Mammary epithelial cell (primary cell): ENCODE measurements at regions of chr17 and their contacts with region 1.

Region 1: DNA sequence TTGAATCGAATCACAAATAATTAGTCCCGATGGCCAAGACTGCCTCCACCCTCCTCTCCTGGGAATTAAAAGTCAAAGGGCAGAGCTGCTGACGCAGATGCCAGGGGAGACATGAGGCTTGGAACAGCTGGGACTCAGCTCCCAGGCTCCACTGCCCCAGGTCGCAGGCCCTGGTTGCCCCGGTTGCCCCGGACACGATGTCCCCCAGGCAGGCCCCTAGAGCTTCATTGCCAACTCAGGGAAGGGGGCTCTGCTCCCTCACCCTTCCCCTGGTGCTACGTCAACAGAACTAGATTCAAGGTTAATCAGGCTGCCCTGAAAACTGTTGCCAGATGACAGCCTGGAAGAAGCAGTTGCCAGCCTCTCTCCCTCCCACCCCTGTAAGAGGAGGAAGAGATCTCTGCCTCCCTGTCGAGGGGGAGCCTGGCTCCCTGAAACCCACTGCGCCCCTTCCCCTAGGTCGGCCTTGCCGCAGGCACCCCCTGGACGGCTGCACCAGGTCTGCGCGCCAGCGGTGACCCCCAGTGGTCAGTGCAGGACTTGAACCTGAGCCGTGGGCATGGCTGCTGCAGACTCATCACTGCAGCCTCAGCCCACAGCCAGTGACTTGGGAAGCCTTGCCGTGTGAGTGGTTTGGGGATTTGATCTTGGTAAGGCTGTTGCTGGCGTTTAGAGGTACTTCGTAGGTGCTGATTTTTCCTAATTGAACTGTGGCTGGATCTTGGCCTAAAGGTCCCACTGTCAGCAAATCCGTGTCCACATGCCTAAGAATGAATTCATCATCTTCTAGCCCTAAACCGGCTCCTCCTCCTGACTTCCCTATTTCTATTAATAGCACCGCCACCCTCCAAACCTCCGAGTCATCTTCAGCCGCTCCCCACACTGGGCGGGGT is 84.1 kb upstream of the TOB1 start:
- DNase-seq: peak; percentile 93
- H3K4me3 ChIP-seq: no peak overlapping the region
- H3K27ac ChIP-seq: peak overlapping the region; percentile 66
- H3K4me1 ChIP-seq: peaks cover 69% of the 10 kb centered on the region
- H3K27me3 ChIP-seq: no peaks in the 10 kb centered on the region
- CTCF ChIP-seq: peak; percentile 56 to 80

Region 2: GRCh38 chr17:50626037-50626574 is 324.1 kb before region 1 on chr17:
- CTCF ChIA-PET with region 1: no interaction called
- dilution Hi-C with region 1: no loop called
- in situ Hi-C with region 1: no loop called
- intact Hi-C with region 1: loop called (anchors 10 kb)
- DNase-seq: peak; percentile 39
- H3K4me3 ChIP-seq: no peak overlapping the region
- H3K27ac ChIP-seq: no peak overlapping the region
- H3K4me1 ChIP-seq: no peaks in the 10 kb centered on the region
- H3K27me3 ChIP-seq: no peaks in the 10 kb centered on the region
- CTCF ChIP-seq: peak; percentile 62 to 80

Region 3: GRCh38 chr17:50763716-50764475 is 186.3 kb before region 1 on chr17:
- CTCF ChIA-PET with region 1: no interaction called
- dilution Hi-C with region 1: loop called (anchors 5 kb)
- in situ Hi-C with region 1: no loop called
- intact Hi-C with region 1: no loop called
- DNase-seq: no peak
- H3K4me3 ChIP-seq: no peak overlapping the region
- H3K27ac ChIP-seq: no peak overlapping the region
- H3K4me1 ChIP-seq: peaks cover 20% of the 10 kb centered on the region
- H3K27me3 ChIP-seq: no peaks in the 10 kb centered on the region
- CTCF ChIP-seq: no peak

Region 4: GRCh38 chr17:50841949-50842354 is 108.3 kb before region 1 on chr17:
- CTCF ChIA-PET with region 1: no interaction called
- dilution Hi-C with region 1: loop called (anchors 5 kb)
- in situ Hi-C with region 1: no loop called
- intact Hi-C with region 1: no loop called
- DNase-seq: peak; percentile 51
- H3K4me3 ChIP-seq: no peak overlapping the region
- H3K27ac ChIP-seq: no peak overlapping the region
- H3K4me1 ChIP-seq: peaks cover 28% of the 10 kb centered on the region
- H3K27me3 ChIP-seq: no peaks in the 10 kb centered on the region
- CTCF ChIP-seq: peak; percentile 86 to 92

Region 5: DNA sequence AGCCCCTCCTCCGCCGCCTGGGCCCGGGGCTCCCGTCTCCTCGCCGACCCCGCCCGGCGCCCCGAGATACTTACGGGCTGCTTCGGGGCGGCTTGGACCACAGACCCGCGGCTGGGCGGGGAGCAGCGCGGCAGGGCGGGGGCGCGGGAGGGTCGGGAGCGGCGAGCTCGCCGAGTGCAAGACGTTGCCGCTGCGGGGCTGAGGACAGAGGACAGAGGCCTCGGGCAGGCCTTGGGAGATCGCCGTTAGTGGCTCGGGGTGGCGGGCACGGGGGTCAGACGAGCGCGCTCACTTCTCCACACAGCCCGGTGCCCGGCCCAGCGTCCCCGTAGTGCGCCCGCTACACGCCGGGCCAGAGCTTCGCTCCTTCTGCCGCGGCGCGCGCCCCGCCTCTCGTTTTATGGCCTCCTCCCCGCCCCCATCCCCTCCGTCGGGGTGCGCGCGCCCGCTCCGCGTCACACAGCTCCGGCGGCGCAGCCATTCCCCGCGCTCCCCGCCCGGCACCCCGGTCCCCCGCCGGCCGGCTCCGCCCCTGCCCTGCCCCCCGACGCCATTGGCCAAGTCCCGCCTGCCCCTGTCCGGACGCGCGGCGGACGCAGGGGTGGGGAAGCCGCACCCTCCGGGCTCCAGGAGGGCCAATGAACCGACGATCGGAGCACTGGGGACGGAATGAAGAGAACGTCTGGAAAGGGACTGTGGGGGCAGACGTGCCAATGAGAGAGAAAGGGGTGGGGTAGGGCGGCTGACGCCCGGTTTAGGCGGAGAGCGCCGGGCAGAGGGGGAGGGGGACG is 84.1 kb before region 1 on chr17 and contains the start of gene TOB1:
- CTCF ChIA-PET with region 1: interaction called, 4 read pairs
- dilution Hi-C with region 1: no loop called
- in situ Hi-C with region 1: loop called in 1 of 2 experiments (anchors 5 kb)
- intact Hi-C with region 1: loop called (anchors 1 kb)
- DNase-seq: peak; percentile 98
- H3K4me3 ChIP-seq: peak within 1 kb of the TSS; percentile 88 to 97 (median 94)
- H3K27ac ChIP-seq: peak within 1 kb of the TSS; percentile 97
- H3K4me1 ChIP-seq: peaks cover 16% of the 10 kb centered on the region
- H3K27me3 ChIP-seq: no peaks in the 10 kb centered on the region
- CTCF ChIP-seq: no peak
- total RNA-seq, gene TOB1: 51.2 to 149 TPM

Region 6: DNA sequence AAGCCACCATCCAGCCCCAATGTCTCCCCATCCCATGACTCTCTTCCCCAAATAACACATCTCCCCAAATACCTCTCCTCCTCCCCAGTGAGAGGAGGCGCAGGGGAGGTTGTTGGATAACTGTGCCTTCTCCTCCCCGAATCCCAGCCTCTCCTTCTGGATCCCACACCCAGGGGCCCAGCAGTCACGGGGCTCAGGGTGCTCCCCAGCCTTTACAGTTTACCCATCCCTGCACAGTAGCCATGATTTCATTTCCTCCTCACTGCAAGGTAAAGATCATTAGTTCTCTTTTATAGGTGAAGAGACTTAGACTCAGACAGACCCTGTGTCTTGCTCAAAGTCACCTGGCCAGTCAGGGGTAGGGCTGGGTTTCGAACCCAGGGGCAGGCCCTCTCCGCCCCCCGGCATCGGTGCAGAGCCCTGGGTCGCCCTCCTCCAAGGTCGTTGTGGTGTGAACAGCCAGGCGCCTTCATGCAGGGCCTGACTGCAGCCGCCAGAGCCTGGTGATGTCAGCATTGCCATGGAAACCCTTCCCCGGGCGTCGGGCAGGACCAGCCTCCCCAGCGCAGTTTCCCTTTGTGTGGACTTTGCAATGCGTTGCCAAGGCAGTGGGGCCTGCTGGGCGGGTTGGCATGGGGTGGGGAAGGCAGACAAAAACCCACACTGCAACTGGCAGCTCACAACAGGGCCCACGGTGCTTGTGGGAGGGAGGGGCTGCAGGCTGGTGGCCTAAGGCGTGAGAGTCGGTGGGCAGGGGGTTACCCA is 30.7 kb before region 1 on chr17:
- CTCF ChIA-PET with region 1: interaction called, 3 read pairs
- dilution Hi-C with region 1: no loop called
- in situ Hi-C with region 1: no loop called
- intact Hi-C with region 1: loop called (anchors 1 kb)
- DNase-seq: peak; percentile 91
- H3K4me3 ChIP-seq: no peak overlapping the region
- H3K27ac ChIP-seq: peak overlapping the region; percentile 83
- H3K4me1 ChIP-seq: peaks cover 57% of the 10 kb centered on the region
- H3K27me3 ChIP-seq: no peaks in the 10 kb centered on the region
- CTCF ChIP-seq: no peak

Region 7: GRCh38 chr17:51010173-51010675 is 60.0 kb after region 1 on chr17:
- CTCF ChIA-PET with region 1: no interaction called
- dilution Hi-C with region 1: no loop called
- in situ Hi-C with region 1: no loop called
- intact Hi-C with region 1: no loop called
- DNase-seq: no peak
- H3K4me3 ChIP-seq: no peak overlapping the region
- H3K27ac ChIP-seq: no peak overlapping the region
- H3K4me1 ChIP-seq: no peaks in the 10 kb centered on the region
- H3K27me3 ChIP-seq: no peaks in the 10 kb centered on the region
- CTCF ChIP-seq: no peak

Region 8: DNA sequence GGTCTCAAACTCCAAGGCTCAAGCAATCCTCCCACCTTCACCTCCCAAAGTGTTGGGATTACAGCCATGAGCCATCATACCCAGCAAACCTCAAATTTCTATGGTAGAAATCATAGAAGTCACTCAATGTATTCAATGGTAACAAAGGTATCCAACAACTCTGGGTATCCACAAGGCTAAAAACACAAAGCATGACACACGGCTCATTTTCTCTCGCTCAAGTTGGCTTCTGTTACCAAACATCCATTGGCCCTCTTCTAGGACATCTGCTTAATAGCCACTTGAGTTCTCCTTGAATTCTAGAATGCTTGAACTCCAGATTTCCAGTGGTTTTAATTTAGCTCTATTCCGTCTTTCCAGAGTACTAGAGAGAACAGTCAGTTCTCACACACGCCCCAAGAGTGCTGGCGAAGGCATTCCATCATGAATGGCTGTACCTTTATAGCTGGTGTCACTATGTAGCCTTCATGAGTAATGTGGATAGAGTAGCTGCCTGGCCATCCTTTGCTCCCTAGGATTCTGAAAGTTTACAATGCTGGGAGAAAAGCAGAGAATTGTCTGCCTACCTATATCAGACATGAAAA is 127.9 kb after region 1 on chr17:
- CTCF ChIA-PET with region 1: no interaction called
- dilution Hi-C with region 1: no loop called
- in situ Hi-C with region 1: no loop called
- intact Hi-C with region 1: no loop called
- DNase-seq: no peak
- H3K4me3 ChIP-seq: no peak overlapping the region
- H3K27ac ChIP-seq: no peak overlapping the region
- H3K4me1 ChIP-seq: peaks cover 7% of the 10 kb centered on the region
- H3K27me3 ChIP-seq: no peaks in the 10 kb centered on the region
- CTCF ChIP-seq: no peak

Region 9: DNA sequence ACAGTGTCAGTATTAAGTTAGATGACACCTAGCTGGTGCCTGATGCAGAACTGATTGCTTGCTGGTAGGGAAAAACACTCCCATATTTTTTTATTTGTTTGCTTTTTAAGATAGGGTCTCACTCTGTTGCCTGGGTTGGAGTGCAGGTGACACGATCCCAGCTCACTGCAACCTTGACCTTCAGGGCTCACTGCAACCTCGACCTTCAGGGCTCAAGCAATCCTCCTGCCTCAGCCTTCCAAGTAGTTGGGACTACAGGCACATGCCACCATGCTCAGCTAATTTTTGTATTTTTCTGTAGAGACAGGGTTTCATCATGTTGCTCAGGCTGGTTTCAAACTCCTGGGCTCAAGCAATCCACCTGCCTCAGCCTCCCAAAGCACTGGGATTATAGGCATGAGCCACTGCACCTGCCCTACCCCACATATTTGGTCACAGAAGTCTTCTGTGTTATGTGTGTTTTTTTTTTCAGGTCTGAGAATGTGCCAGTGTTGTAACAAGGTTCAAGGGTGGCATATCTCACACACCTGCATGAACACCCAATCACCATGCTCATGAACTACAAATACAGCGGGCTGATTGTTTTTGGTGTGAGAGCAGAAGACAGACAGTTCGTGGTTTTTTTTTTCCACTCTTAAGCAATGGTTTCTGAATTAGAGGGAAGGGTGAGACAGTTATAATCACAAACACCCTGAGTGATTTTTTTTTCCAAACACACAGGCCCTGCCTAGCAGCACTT is 147.6 kb after region 1 on chr17:
- CTCF ChIA-PET with region 1: no interaction called
- dilution Hi-C with region 1: no loop called
- in situ Hi-C with region 1: no loop called
- intact Hi-C with region 1: no loop called
- DNase-seq: peak; percentile 24
- H3K4me3 ChIP-seq: no peak overlapping the region
- H3K27ac ChIP-seq: no peak overlapping the region
- H3K4me1 ChIP-seq: no peaks in the 10 kb centered on the region
- H3K27me3 ChIP-seq: no peaks in the 10 kb centered on the region
- CTCF ChIP-seq: no peak

Region 10: GRCh38 chr17:51120739-51121617 is 170.7 kb after region 1 on chr17 and contains the start of gene SPAG9:
- CTCF ChIA-PET with region 1: no interaction called
- dilution Hi-C with region 1: no loop called
- in situ Hi-C with region 1: no loop called
- intact Hi-C with region 1: loop called (anchors 1 kb)
- DNase-seq: peak; percentile 97
- H3K4me3 ChIP-seq: peak within 1 kb of the TSS; percentile 66 to 100 (median 67)
- H3K27ac ChIP-seq: peak within 1 kb of the TSS; percentile 100
- H3K4me1 ChIP-seq: peaks cover 30% of the 10 kb centered on the region
- H3K27me3 ChIP-seq: no peaks in the 10 kb centered on the region
- CTCF ChIP-seq: no peak
- total RNA-seq, gene SPAG9: 80.4 to 95.3 TPM